ENCODE measurements at regions of chr19 and their contacts with region 1.

Region 1: GRCh38 chr19:57389730-57390598 is at the start of gene ZNF548:
- DNase-seq: peak; percentile 97 to 99
- H3K4me3 ChIP-seq: peak within 1 kb of the TSS; percentile 72 to 80
- H3K27ac ChIP-seq: peak within 1 kb of the TSS; percentile 93
- H3K4me1 ChIP-seq: peaks cover 0 to 10% of the 10 kb centered on the region in 2 donors
- H3K27me3 ChIP-seq: no peaks in the 10 kb centered on the region
- CTCF ChIP-seq: peak in 2 of 3 experiments; percentile 15 to 35
- total RNA-seq, gene ZNF548: 0.96 TPM

Region 2: GRCh38 chr19:57240311-57241090 is 149.5 kb before region 1 on chr19 and contains the start of gene ZNF805:
- intact Hi-C with region 1: loop called (anchors 1 kb)
- DNase-seq: peak; percentile 80 to 97
- H3K4me3 ChIP-seq: peak within 1 kb of the TSS; percentile 84 to 91
- H3K27ac ChIP-seq: peak within 1 kb of the TSS; percentile 87 to 97
- H3K4me1 ChIP-seq: peaks cover 0 to 8% of the 10 kb centered on the region in 2 donors
- H3K27me3 ChIP-seq: no peaks in the 10 kb centered on the region
- CTCF ChIP-seq: peak in 1 of 3 experiments; percentile 13
- total RNA-seq, gene ZNF805: 22.8 TPM

Region 3: DNA sequence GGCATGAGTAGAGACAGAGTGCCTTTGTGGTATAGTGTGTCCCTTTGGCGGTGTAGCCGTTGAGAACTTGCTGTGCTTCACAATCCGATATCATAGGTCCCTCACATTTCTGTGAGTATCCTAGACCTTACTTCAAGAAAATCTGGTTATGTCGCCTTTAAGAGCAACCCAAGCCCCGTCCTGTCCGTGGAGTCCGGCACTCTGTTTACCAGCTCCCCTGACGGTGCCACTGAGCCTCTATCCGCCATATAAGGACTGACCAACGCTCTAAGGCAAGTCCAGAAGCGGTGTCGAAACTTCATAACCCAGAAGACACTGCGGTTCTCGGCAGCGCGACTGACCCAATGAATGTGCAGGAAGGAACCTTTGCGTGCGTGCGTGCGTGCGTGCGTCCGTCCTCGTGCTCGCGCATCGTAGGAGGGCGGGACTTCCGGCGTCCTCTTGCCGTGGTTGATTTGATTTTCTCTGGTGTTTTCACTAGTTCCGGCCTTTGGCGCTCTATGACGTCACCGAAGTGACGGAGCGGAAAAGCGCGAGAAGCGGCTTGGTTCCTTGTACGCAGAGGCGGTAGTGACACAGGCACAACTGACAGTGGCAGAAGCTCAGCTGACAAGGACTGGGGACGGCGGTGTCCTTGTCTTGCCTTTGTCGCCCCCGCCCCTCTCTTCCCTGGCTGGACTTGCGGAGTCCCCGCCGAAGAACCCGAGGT is 26.8 kb before region 1 on chr19 and contains the starts of genes TRAPPC2B and ZNF547:
- intact Hi-C with region 1: loop called (anchors 1 kb)
- DNase-seq: peak; percentile 99 to 100
- H3K4me3 ChIP-seq: peak within 1 kb of the TSS; percentile 79 to 87
- H3K27ac ChIP-seq: peak within 1 kb of the TSS; percentile 95
- H3K4me1 ChIP-seq: no peaks in the 10 kb centered on the region
- H3K27me3 ChIP-seq: no peaks in the 10 kb centered on the region
- CTCF ChIP-seq: no peak
- total RNA-seq, gene TRAPPC2B: 1.8 TPM
- total RNA-seq, gene ZNF547: not detected

Region 4: DNA sequence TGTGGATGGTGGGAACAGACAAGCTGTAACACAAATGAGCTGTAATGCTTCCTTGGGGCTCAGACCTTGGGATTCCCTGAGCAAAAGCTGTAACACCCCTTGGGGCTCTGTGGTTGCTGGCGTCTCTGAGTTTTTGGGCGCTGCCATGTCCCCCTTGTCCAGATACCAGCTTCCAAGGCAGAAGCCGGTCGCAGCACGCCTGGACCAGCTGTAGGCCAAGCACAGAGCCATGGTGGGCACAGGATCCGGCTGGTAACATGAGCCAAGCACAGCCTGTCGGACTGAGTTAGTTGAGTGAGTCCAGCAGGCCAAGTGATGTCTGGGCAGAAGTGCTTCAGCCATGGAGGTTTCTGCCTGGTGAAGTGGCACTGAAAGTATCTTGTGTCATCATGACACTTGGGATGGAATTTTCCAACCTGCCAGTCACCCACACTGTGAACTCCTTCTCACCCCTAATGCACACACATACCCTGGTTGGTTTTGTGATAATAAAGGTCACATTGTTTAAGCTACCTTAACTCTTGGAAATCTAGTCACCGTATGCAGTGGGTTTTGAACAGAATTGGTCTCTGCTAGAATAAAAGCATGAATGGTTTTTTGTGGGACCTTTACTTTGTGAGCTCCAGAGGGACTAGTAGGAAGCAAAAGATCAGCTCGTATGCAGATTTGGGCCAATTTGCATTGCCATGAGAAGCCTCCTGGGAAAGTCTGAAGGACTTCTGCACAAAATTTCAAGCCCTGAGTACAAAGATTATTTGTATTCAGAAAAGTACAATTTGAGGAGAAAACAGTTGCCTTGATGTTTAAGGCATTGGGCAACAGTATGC is 14.0 kb after region 1 on chr19:
- intact Hi-C with region 1: no loop called
- DNase-seq: no peak
- H3K4me3 ChIP-seq: no peak overlapping the region
- H3K27ac ChIP-seq: no peak overlapping the region
- H3K4me1 ChIP-seq: no peaks in the 10 kb centered on the region
- H3K27me3 ChIP-seq: no peaks in the 10 kb centered on the region
- CTCF ChIP-seq: no peak

Region 5: DNA sequence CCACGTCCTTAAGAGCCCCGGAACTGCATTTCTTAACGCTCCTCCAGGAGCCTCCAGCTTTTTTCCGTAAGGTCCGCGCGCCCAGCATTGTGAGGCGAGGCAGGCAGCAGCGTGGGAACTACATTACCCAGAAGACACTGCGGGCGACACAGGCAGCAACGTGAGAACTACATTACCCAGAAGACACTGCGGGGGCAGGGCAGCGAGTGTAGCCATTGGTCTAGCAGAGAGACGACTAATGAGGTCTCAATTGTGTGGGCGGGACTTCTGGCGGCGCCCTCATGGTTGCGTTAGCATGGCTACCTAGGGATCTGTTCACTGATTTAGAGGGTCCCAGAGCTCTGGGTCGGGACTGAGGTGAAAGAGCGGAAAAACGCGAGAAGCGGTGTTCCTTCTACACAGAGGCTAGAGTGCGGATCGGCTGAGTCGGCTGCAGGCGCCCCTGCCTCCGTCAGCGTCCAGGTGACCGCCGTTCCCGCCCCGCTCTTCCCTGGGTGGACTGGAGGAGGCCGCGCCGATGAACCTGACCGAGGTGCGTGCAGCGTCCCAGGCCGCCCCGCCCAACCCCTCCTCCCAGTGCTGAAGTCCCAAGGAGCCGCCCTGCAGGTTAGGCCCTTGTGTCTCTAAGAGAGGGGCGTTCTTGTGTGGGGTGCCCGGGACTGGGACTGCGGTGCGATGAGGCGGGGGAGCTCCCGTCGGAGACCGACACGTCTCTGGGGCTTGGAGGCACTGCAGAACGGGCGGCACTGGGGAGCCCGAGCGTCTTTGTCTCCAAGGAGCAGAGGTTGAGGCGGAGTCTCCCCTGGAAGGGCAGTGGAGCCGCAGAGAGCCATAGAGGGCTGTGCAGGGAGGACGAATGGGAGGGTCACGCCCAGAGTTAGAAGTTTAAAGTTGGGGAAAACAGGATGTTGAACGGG is 45.4 kb after region 1 on chr19 and contains the start of gene ZNF749:
- intact Hi-C with region 1: loop called (anchors 1 kb)
- DNase-seq: peak; percentile 98 to 99
- H3K4me3 ChIP-seq: peak within 1 kb of the TSS; percentile 84 to 85
- H3K27ac ChIP-seq: no peak within 1 kb of the TSS
- H3K4me1 ChIP-seq: peaks cover 5 to 9% of the 10 kb centered on the region in 2 donors
- H3K27me3 ChIP-seq: no peaks in the 10 kb centered on the region
- CTCF ChIP-seq: no peak
- total RNA-seq, gene ZNF749: 2.7 TPM

Region 6: DNA sequence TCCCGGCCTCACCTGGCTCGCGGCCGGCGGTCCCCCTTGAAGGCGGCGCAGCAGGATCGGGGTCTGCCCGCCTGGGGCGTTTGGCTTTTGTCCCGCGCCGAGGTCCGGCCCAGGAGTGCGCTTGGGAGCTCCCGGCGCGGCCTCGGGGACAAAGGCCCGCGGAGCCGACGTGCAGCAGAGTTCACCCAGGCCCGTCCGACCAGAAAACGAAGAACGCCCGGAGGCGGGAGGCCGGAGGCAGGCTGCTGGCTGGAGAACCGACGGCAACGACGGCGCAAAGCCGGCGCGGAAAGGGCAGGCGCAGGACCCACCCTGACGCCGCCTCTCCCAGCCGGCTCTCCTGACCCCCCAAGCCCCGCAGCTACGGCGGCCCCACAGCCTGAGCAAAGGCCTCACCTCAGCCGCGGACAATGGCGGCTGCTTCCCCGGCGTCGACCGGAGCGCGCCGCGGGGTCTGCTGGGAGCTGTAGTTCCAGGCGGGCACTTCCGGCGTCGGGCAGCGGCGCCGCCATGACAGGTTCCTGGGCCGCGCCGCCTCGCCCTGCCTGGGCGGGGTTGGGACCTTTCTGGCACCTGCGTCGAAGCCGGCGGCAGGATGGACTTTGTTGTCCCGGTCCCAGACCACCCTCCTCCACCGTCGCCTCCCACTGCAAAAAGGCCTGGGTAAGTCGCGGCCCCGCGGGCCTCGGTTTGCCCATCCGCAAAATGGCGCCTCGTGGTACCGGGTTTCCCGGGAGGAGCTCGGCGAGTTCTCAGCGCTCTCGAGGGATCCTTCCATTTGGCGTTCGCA is 612.6 kb after region 1 on chr19 and contains the start of gene ZNF606:
- intact Hi-C with region 1: loop called (anchors 5 kb)
- DNase-seq: peak; percentile 25 to 90
- H3K4me3 ChIP-seq: peak within 1 kb of the TSS; percentile 78 to 98
- H3K27ac ChIP-seq: peak within 1 kb of the TSS; percentile 89 to 93
- H3K4me1 ChIP-seq: peaks cover 4 to 11% of the 10 kb centered on the region in 2 donors
- H3K27me3 ChIP-seq: no peaks in the 10 kb centered on the region
- CTCF ChIP-seq: no peak
- total RNA-seq, gene ZNF606: 1.5 TPM

Measured in ascending aorta (tissue), 2 donors.